ENCODE measurements at regions of chr5 and their contacts with region 1.

Region 1: DNA sequence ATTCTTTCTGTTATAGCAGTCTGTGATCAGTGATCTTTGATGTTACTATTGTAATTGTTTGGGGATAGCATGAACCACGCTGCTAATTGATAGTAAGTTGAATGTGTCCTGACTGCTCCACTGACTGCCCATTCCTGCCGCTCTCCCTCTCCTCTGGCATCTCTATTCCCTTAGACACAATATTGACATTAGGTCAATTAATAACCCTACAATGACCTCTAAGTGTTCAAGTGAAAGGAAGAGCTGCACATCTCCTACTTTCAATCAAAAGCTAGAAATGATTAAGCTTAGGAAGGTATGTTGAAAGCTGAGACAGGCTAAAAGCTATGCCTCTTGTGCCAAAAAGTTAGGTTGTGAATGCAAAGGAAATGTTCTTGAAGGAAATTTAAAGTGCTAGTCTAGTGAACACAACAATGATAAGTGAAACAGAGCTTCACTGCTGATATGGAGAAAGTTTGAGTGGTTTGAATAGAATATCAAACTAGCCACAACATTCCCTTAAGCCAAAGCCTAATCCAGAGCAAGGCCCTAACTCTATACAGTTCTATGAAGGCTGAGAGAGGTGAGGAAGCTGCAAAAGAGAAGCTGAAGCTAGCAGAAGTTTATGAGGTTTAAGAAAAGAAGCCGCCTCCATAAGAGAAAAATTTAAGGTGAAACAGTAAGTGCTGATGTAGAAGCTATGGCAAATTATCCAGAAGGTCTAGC is 12.9 kb downstream of the CLINT1 start:
- DNase-seq: no peak
- H3K4me3 ChIP-seq: no peak overlapping the region
- H3K27ac ChIP-seq: no peak overlapping the region
- H3K4me1 ChIP-seq: peaks cover 0 to 3% (median 0%) of the 10 kb centered on the region in 4 experiments; a peak in 1 of 7 replicates
- H3K27me3 ChIP-seq: no peaks in the 10 kb centered on the region; a peak in 1 of 7 replicates
- CTCF ChIP-seq: no peak
- EP300 ChIP-seq: no peak
- POLR2A ChIP-seq: no peak
- RAD21 ChIP-seq: no peak

Region 2: DNA sequence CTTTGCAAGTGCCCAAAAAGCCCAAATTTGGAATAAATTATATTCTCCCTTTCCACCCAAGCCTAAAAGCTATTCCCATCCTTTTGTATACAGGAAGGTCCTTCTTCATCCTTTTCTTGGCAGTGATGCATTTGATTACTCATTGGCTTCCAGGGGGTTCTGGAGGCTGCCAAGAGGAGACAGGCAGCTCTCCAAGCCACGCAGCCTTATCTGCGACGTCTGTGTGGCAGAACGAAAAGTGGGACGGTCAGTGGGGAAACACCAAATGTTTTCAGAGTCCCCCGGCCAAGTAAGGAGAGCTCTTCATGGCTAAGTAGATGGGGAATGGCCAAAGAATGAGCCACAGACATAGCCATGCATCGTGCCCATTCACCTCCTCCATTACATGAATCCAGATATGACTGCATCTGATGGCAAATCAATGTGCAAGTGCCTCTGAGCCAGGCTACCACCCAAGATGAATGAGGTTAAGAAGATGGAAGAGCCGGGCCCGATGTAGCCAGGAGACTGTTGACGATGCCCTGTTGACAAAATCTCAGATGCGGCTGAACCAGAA is 282.6 kb before region 1 on chr5:
- CTCF ChIA-PET with region 1: no interaction called
- POLR2A ChIA-PET with region 1: no interaction called
- DNase-seq: no peak
- H3K4me3 ChIP-seq: no peak overlapping the region
- H3K27ac ChIP-seq: no peak overlapping the region
- H3K4me1 ChIP-seq: peaks cover 0 to 12% (median 7%) of the 10 kb centered on the region in 4 experiments; a peak in 6 of 7 replicates
- H3K27me3 ChIP-seq: no peaks in the 10 kb centered on the region
- CTCF ChIP-seq: no peak
- EP300 ChIP-seq: no peak
- POLR2A ChIP-seq: no peak
- RAD21 ChIP-seq: no peak

Region 3: GRCh38 chr5:157665467-157666100 is 180.5 kb before region 1 on chr5:
- CTCF ChIA-PET with region 1: no interaction called
- POLR2A ChIA-PET with region 1: no interaction called
- DNase-seq: no peak
- H3K4me3 ChIP-seq: no peak overlapping the region
- H3K27ac ChIP-seq: no peak overlapping the region
- H3K4me1 ChIP-seq: no peaks in the 10 kb centered on the region
- H3K27me3 ChIP-seq: no peaks in the 10 kb centered on the region
- CTCF ChIP-seq: no peak
- EP300 ChIP-seq: no peak
- POLR2A ChIP-seq: no peak
- RAD21 ChIP-seq: no peak

Region 4: GRCh38 chr5:157828944-157829632 is 17.0 kb before region 1 on chr5:
- CTCF ChIA-PET with region 1: interaction called, 10 read pairs
- POLR2A ChIA-PET with region 1: interaction called, 3 read pairs
- DNase-seq: peak in 1 of 2 experiments; percentile 57
- H3K4me3 ChIP-seq: no peak overlapping the region
- H3K27ac ChIP-seq: no peak overlapping the region
- H3K4me1 ChIP-seq: 0 out of 7 replicates have a peak, but pooled peaks cover 0 to 2% (median 0%) of the 10 kb centered on the region in 4 experiments
- H3K27me3 ChIP-seq: no peaks in the 10 kb centered on the region
- CTCF ChIP-seq: peak; percentile 48 to 69 (median 50)
- EP300 ChIP-seq: no peak
- POLR2A ChIP-seq: no peak
- RAD21 ChIP-seq: peak; percentile 25 to 38; a peak in 2 of 4 replicates

Region 5: DNA sequence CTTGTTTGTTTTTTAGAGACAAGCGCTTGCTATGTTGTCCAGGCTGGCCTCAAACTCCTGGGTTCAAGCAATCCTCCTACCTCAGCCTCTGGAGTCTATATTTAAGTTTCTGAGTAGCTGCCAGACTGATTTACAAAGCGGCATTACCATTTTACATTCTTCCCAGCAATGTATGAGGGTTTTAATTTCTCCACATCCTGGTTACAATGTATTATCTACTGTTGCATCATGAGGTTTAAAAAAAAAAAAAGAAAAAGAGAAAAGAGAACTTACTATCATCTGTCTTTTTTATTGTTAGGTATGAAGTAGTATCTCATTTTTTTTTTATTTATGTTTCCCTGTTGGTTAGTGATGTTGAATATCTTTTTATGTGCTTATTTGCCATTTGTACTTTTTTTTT is 31.8 kb after region 1 on chr5:
- CTCF ChIA-PET with region 1: no interaction called
- POLR2A ChIA-PET with region 1: no interaction called
- DNase-seq: no peak
- H3K4me3 ChIP-seq: no peak overlapping the region
- H3K27ac ChIP-seq: no peak overlapping the region
- H3K4me1 ChIP-seq: peaks cover 0 to 7% (median 3%) of the 10 kb centered on the region in 4 experiments; a peak in 4 of 7 replicates
- H3K27me3 ChIP-seq: peaks cover 0 to 5% (median 4%) of the 10 kb centered on the region in 4 experiments; a peak in 3 of 7 replicates
- CTCF ChIP-seq: no peak
- EP300 ChIP-seq: no peak
- POLR2A ChIP-seq: no peak
- RAD21 ChIP-seq: no peak

Region 6: GRCh38 chr5:158026304-158027031 is 180.4 kb after region 1 on chr5:
- CTCF ChIA-PET with region 1: no interaction called
- POLR2A ChIA-PET with region 1: no interaction called
- DNase-seq: no peak
- H3K4me3 ChIP-seq: no peak overlapping the region
- H3K27ac ChIP-seq: no peak overlapping the region
- H3K4me1 ChIP-seq: peaks cover 0 to 5% (median 2%) of the 10 kb centered on the region in 4 experiments; a peak in 3 of 7 replicates
- H3K27me3 ChIP-seq: no peaks in the 10 kb centered on the region
- CTCF ChIP-seq: no peak
- EP300 ChIP-seq: no peak
- POLR2A ChIP-seq: no peak
- RAD21 ChIP-seq: no peak